ENCODE measurements at regions of chr11 and their contacts with region 1.

Region 1: GRCh38 chr11:75667831-75668450 is 897 bp downstream of the MAP6 start:
- DNase-seq: peak; percentile 66 to 96 (median 78)

Region 2: GRCh38 chr11:75582895-75583717 is 84.8 kb before region 1 on chr11:
- intact Hi-C with region 1: loop called (anchors 2 kb)
- DNase-seq: peak; percentile 40 to 92 (median 60)

Region 3: GRCh38 chr11:75639762-75640181 is 28.2 kb before region 1 on chr11:
- intact Hi-C with region 1: loop called (anchors 2 kb)
- DNase-seq: peak; percentile 70 to 98 (median 88)

Measured in posterior cingulate gyrus (tissue), 11 donors.